Calu3 (cell line): ENCODE measurements at regions of chr6 and their contacts with region 1.

Region 1: DNA sequence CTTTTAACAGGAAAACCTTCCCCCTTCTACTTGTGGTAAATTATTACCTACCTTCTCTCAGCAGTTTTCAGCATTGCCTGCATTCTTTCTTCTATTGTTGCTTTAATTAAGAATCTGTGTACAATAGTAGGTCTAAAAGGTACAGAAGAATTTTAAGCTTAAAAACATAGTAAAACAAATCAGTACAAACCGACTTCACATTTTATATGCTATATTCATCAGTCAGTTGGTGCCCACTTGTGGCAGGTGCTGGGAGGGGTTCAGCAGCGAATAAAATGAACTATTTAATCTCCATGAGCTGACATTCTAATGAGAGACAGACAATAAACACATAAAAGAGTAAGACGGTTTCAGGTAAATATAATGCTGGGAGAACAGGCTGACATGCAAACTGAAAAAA is 73.4 kb upstream of the FBXO30 start:
- DNase-seq: peak; percentile 1
- H3K4me3 Mint-ChIP-seq: no peak overlapping the region
- H3K27ac Mint-ChIP-seq: no peak overlapping the region
- H3K4me1 Mint-ChIP-seq: no peaks in the 10 kb centered on the region
- H3K27me3 Mint-ChIP-seq: no peaks in the 10 kb centered on the region
- CTCF ChIP-seq: no peak

Region 2: DNA sequence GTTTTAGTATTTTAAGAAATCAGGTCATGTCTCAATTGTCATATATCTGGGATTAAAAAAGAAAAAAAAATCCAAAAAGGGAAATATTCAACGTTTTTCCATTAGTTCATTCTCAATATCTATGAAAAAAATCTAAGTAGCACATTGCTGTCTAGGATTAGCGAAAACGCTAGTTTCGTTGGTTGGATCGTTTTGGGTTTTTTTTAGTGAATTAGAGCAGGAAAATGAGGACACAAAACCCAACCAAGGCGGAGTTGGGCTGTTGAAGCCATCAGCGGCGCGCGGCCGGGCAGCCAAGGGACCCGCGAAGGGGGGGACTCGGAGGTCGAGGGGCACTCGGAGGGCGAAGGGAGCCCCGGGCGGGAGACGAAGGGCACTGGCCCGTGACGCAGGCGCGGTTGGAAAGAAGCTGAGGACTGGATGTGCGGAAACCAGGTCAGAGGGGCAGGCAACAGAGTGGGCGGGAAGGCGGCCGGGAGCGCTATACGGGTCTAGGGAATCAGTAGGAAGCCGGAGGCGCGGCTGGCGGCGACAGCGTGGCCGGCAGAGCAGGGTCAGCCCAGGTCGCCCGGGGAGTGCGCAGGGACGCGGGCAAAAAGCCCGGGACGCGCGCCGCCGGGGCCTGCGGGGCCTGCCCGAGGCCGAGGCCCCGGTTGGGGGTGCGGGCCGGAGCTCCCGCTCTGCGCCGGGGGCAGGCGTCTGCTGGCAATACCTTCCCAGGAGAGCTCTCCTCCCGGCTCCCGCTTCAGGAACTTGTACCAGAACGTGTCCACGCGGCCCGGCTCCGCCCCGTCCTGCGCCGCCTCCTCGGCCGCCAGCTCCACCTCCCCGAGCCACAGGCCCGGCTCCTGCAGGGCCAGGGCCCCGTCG is 153.2 kb before region 1 on chr6:
- CTCF ChIA-PET with region 1: interaction called, 3 read pairs
- intact Hi-C with region 1: loop called (anchors 10 kb)
- DNase-seq: peak; percentile 84
- H3K4me3 Mint-ChIP-seq: peak overlapping the region; percentile 90
- H3K27ac Mint-ChIP-seq: peak overlapping the region; percentile 94
- H3K4me1 Mint-ChIP-seq: no peaks in the 10 kb centered on the region
- H3K27me3 Mint-ChIP-seq: no peaks in the 10 kb centered on the region
- CTCF ChIP-seq: no peak